ENCODE measurements at regions of chr1 and their contacts with region 1.

Region 1: DNA sequence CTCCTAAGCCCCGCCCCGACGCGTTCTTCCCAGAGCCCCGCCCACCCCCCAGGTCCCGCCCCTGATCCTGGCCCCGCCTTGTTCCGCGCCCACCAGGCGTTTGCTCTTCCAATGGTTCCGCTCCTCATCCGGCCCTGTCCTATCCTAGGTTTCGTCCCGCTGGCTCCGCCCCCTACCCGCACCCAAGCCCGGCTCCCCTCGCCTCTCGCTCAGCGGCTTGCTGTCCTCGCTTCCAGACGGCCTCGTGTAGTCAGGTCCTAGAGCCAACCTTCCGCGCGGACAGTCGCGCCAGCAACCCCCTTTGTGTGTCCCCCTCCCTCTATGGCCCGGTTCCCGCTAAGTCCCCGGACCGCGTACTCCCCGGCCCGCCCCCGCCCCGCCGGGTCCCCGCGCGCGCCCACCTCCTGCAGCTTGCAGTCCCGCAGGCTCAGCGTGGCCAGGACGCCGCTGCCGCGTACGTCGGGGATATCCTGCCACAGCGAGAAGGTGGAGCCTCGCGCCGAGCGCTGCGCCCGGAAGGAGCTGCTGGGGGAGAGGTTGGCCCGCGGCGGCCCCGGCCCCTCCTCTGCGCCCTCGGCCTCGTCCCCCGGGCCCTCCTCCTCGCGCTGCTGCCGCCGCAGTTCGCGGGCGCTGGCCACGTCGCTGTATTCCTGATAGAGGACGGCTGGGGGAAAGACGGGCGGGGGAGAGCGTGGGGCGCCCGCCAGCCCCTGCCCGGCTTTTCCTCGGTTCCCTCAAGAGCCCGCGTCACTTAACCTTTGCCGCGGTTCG is 5.7 kb downstream of the ARHGEF19 start:
- DNase-seq: peak; percentile 95
- H3K4me3 Mint-ChIP-seq: peak overlapping the region; percentile 89
- H3K27ac Mint-ChIP-seq: peak overlapping the region; percentile 99
- H3K4me1 Mint-ChIP-seq: peaks cover 11% of the 10 kb centered on the region
- H3K27me3 Mint-ChIP-seq: no peaks in the 10 kb centered on the region

Region 2: GRCh38 chr1:16143566-16144324 is 63.0 kb before region 1 on chr1:
- CTCF ChIA-PET with region 1: no interaction called
- POLR2A ChIA-PET with region 1: no interaction called
- DNase-seq: no peak
- H3K4me3 Mint-ChIP-seq: no peak overlapping the region
- H3K27ac Mint-ChIP-seq: no peak overlapping the region
- H3K4me1 Mint-ChIP-seq: peaks cover 2% of the 10 kb centered on the region
- H3K27me3 Mint-ChIP-seq: peaks cover 10% of the 10 kb centered on the region

Region 3: DNA sequence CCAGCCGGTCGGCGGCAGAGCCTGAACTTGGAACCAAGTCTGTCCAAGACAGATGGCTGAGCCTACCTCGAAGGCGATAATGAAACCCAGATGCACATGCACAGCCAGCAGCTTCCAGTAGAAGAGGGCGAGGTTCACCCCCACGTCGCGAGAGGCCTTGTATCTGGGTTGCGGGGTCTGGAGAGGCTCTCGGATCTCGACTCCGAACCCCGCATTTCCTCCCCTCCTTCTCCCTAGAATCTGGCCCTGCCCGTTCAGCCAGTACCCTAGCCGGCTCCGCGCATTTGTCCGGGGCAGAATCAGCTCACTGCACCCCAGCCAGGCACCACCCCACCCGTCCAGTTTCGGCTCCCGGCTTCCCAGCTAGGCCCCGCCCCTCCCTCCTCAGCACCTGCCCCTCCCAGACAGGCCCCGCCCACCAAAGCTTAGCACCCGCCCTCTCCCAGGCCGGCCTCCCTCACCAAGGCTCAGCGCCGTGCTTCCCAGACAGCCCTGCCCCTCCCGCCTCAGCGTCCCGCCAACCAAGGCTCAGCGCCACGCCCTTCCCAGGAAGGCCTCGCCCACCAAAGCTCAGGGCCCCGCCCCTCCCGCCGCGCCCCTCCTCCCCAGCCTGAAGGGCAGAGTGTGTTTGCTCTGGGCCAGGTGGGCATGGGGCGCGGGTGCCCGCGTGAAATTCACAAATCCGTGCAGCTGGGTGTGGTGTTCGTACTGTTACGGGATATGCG is 10.5 kb after region 1 on chr1:
- CTCF ChIA-PET with region 1: interaction called, 11 read pairs
- POLR2A ChIA-PET with region 1: interaction called, 8 read pairs
- DNase-seq: peak; percentile 95
- H3K4me3 Mint-ChIP-seq: peak overlapping the region; percentile 80
- H3K27ac Mint-ChIP-seq: peak overlapping the region; percentile 66
- H3K4me1 Mint-ChIP-seq: peaks cover 39% of the 10 kb centered on the region
- H3K27me3 Mint-ChIP-seq: peaks cover 14% of the 10 kb centered on the region